Tibial artery (tissue), 4 donors: ENCODE measurements at regions of chr2 and their contacts with region 1.

Region 1: DNA sequence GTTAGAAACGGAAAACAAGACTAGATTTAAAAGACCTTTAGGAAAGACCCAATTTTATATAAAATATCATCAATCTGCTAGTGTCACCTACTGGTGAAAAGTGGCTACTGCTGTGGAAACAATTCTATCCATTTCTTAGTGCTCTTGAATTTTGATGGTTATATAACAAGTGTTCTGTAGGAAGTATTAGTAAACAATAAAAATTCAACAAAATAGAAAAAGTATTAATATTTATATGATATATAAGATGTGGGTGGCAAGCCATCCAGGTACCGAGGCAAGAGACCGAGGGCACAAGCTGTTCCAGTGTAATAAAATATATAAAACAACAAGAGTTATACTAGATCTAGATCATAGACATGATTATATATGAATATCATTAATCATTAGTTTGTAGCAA is 6.2 kb upstream of the TMEM87B start:
- DNase-seq: no peak
- H3K4me3 ChIP-seq: no peak overlapping the region
- H3K27ac ChIP-seq: peak overlapping the region in 1 of 2 donors; percentile 30
- H3K4me1 ChIP-seq: peaks cover 0 to 11% (median 3%) of the 10 kb centered on the region in 4 donors
- H3K27me3 ChIP-seq: no peaks in the 10 kb centered on the region
- CTCF ChIP-seq: peak; percentile 54 to 89

Region 2: DNA sequence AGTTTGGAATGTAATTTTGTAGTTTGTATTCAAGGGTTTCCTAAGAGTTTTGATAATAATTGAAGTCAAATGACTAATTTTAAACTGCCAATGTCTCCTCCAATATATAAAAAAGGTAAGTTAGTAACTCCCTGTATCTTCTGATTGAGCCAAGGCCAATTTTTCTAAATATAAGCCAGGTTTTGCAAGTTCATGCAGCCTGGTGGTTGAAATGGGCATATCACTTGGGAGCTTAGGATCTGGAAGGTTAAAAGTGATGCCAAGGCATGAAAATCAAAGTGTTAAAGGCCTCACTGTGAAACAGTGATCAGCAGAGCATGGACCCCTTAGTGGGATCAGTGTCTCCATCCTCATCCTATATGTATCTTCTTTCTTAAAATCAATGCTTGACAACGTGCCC is 90.0 kb before region 1 on chr2:
- intact Hi-C with region 1: no loop called
- DNase-seq: no peak
- H3K4me3 ChIP-seq: no peak overlapping the region
- H3K27ac ChIP-seq: peak overlapping the region; percentile 73 to 81
- H3K4me1 ChIP-seq: peaks cover 0 to 75% (median 35%) of the 10 kb centered on the region in 4 donors
- H3K27me3 ChIP-seq: no peaks in the 10 kb centered on the region
- CTCF ChIP-seq: peak; percentile 43 to 45

Region 3: DNA sequence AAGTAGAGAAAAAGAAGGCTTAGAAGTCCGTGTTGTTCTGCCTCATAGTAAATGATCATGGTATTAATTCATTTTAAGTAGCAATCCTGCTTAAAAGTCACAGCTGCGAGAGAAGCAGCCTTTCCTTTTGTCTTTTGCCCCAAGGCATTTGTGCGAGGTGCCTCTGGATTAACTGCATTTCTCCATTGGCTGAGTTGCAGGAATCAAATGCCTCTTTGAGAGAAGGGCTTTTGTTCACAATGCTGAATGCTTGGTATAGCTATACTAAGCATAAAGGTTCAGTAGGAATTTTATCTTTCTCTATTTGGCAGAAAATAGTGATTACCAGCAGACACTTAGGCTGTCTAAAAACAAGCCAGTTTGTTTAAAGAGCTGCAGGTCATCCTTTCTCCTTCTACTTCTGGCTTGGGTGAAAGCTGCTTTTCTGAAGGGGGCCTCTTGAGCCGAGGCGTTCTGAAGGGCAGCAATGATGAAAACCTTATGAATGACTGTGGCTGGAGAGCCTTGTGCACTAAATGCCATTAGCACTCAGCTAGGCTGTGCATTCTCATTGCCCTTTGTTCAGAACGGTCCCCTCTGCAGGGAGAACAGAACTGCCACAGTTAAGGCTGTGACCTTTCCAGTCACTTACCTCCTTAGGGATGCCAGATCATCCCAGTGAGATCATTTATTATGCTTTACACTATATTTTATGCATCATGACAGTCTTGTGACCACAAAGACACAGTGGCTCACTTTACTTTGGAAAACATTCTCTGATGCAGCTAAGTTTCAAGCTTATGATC is 62.6 kb before region 1 on chr2:
- intact Hi-C with region 1: loop called (anchors 10 kb)
- DNase-seq: no peak
- H3K4me3 ChIP-seq: no peak overlapping the region
- H3K27ac ChIP-seq: no peak overlapping the region
- H3K4me1 ChIP-seq: no peaks in the 10 kb centered on the region
- H3K27me3 ChIP-seq: no peaks in the 10 kb centered on the region
- CTCF ChIP-seq: no peak

Region 4: GRCh38 chr2:112121682-112122254 is 72.9 kb after region 1 on chr2:
- intact Hi-C with region 1: no loop called
- DNase-seq: no peak
- H3K4me3 ChIP-seq: no peak overlapping the region
- H3K27ac ChIP-seq: no peak overlapping the region
- H3K4me1 ChIP-seq: no peaks in the 10 kb centered on the region
- H3K27me3 ChIP-seq: no peaks in the 10 kb centered on the region
- CTCF ChIP-seq: peak; percentile 48 to 65